K562 (cell line): ENCODE measurements at regions of chr3 and their contacts with region 1.

Region 1: GRCh38 chr3:113575206-113575605 is 42.9 kb downstream of the SIDT1 start:
- DNase-seq: no peak
- ATAC-seq: no peak
- H3K4me3 ChIP-seq: no peak overlapping the region
- H3K27ac ChIP-seq: no peak overlapping the region
- H3K4me1 ChIP-seq: no peaks in the 10 kb centered on the region
- H3K27me3 ChIP-seq: no peaks in the 10 kb centered on the region
- CTCF ChIP-seq: no peak
- EP300 ChIP-seq: no peak
- POLR2A ChIP-seq: no peak
- RAD21 ChIP-seq: no peak

Region 2: DNA sequence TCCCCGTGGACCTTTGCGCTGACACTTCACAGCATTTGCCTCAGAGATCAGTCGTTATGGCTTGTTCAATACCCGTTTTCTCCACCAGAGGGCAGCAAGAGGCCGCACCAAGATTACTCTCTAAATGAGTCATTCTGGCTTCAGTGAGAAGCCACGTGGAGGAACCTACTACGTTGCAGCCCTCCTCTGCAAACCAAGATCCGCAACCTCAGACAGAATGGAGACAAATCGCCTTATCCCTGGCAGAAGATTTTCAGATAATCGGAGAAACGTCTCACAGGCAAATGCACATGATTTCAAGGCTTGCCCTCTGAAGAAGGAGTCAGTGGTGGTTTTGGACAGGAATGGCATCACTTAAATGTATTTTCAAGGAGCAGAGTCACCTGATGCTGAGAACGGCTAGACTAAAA is 523.9 kb before region 1 on chr3:
- CTCF ChIA-PET with region 1: no interaction called
- POLR2A ChIA-PET with region 1: no interaction called
- in situ Hi-C with region 1: no loop called
- intact Hi-C with region 1: loop called (anchors 1 kb)
- DNase-seq: peak; percentile 62 to 73 (median 65)
- ATAC-seq: peak; percentile 95
- H3K4me3 ChIP-seq: no peak overlapping the region
- H3K27ac ChIP-seq: no peak overlapping the region
- H3K4me1 ChIP-seq: no peaks in the 10 kb centered on the region; a peak in 2 of 5 replicates
- H3K27me3 ChIP-seq: no peaks in the 10 kb centered on the region; a peak in 1 of 5 replicates
- CTCF ChIP-seq: peak; percentile 66 to 79 (median 75)
- EP300 ChIP-seq: no peak
- POLR2A ChIP-seq: no peak
- RAD21 ChIP-seq: peak; percentile 78 to 88

Region 3: GRCh38 chr3:113339616-113340244 is 235.5 kb before region 1 on chr3:
- CTCF ChIA-PET with region 1: no interaction called
- POLR2A ChIA-PET with region 1: no interaction called
- in situ Hi-C with region 1: no loop called
- intact Hi-C with region 1: loop called (anchors 5 kb)
- DNase-seq: peak in 2 of 4 experiments; percentile 6
- ATAC-seq: peak; percentile 69; the same call in 2 of the 3 replicates
- H3K4me3 ChIP-seq: no peak overlapping the region
- H3K27ac ChIP-seq: no peak overlapping the region
- H3K4me1 ChIP-seq: no peaks in the 10 kb centered on the region
- H3K27me3 ChIP-seq: no peaks in the 10 kb centered on the region
- CTCF ChIP-seq: peak; percentile 39 to 87 (median 62)
- EP300 ChIP-seq: no peak
- POLR2A ChIP-seq: no peak
- RAD21 ChIP-seq: peak in 1 of 2 experiments; percentile 28; a peak in 1 of 4 replicates

Region 4: GRCh38 chr3:113660896-113661295 is 85.7 kb after region 1 on chr3:
- CTCF ChIA-PET with region 1: no interaction called
- POLR2A ChIA-PET with region 1: no interaction called
- in situ Hi-C with region 1: no loop called
- intact Hi-C with region 1: no loop called
- DNase-seq: no peak
- ATAC-seq: no peak
- H3K4me3 ChIP-seq: no peak overlapping the region
- H3K27ac ChIP-seq: no peak overlapping the region
- H3K4me1 ChIP-seq: no peaks in the 10 kb centered on the region
- H3K27me3 ChIP-seq: no peaks in the 10 kb centered on the region
- CTCF ChIP-seq: no peak
- EP300 ChIP-seq: no peak
- POLR2A ChIP-seq: no peak
- RAD21 ChIP-seq: no peak

Region 5: GRCh38 chr3:115388166-115388565 is 1813.0 kb after region 1 on chr3:
- CTCF ChIA-PET with region 1: no interaction called
- POLR2A ChIA-PET with region 1: no interaction called
- in situ Hi-C with region 1: no loop called
- intact Hi-C with region 1: no loop called
- DNase-seq: no peak
- ATAC-seq: no peak
- H3K4me3 ChIP-seq: no peak overlapping the region
- H3K27ac ChIP-seq: no peak overlapping the region
- H3K4me1 ChIP-seq: no peaks in the 10 kb centered on the region
- H3K27me3 ChIP-seq: no peaks in the 10 kb centered on the region
- CTCF ChIP-seq: no peak
- EP300 ChIP-seq: no peak
- POLR2A ChIP-seq: no peak
- RAD21 ChIP-seq: no peak